CD4-positive, alpha-beta T cell (primary cell): ENCODE measurements at regions of chr17 and their contacts with region 1.

Region 1: DNA sequence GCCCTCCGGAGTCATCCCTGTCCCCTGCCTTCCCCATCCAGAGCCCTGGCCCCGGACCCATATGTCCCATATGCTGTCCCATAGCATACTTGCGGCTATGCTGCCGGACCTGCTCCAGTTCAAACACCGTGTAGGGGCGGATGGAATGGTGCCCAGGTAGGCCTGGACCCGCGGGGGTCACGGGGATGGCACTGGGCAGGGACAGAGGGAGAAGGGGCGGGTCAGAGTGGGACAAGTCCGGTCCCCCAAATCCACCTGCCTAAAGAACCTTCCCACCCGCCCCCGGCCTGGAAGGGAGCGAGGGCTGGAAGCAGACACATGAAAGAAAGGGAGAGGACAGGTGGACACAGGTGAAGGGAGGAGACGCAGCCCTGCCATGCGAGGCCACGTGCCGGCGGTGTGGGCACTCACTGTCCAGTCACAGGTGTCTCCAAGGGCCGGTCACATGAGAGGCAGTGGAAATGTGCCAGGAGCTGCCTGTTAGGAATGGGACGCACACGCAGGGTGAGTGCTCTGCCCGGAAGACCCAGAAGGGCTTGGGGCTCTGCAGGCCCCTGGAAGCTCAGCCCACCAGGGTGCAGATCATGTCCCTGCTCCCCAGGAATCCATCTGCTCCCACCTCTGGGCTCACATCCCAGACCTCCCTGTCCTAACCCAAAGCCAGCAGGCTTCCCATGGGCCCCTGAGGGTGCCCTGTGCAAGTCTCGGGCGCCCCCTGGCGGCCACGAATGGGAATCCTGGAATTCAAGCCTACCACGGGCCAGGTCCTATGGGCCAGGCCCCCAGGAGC is 14.0 kb downstream of the UBALD2 start:
- DNase-seq: peak; percentile 74 to 91 (median 84)
- ATAC-seq: peak; percentile 89
- H3K4me3 ChIP-seq: no peak overlapping the region
- H3K4me3 Mint-ChIP-seq: no peak overlapping the region
- H3K27ac ChIP-seq: no peak overlapping the region
- H3K27ac Mint-ChIP-seq: no peak overlapping the region
- H3K4me1 ChIP-seq: peaks cover 31% of the 10 kb centered on the region
- H3K4me1 Mint-ChIP-seq: peaks cover 13% of the 10 kb centered on the region
- H3K27me3 ChIP-seq: no peaks in the 10 kb centered on the region
- H3K27me3 Mint-ChIP-seq: no peaks in the 10 kb centered on the region
- CTCF ChIP-seq: peak; percentile 98

Region 2: GRCh38 chr17:76153640-76154039 is 125.5 kb before region 1 on chr17:
- CTCF ChIA-PET with region 1: interaction called, 13 read pairs
- POLR2A ChIA-PET with region 1: interaction called, 5 read pairs
- intact Hi-C with region 1: no loop called
- DNase-seq: no peak
- ATAC-seq: no peak
- H3K4me3 ChIP-seq: no peak overlapping the region
- H3K4me3 Mint-ChIP-seq: peak overlapping the region; percentile 30
- H3K27ac ChIP-seq: peak overlapping the region; percentile 24 to 72
- H3K27ac Mint-ChIP-seq: peak overlapping the region; percentile 99
- H3K4me1 ChIP-seq: peaks cover 35% of the 10 kb centered on the region
- H3K4me1 Mint-ChIP-seq: peaks cover 50% of the 10 kb centered on the region
- H3K27me3 ChIP-seq: no peaks in the 10 kb centered on the region
- H3K27me3 Mint-ChIP-seq: no peaks in the 10 kb centered on the region
- CTCF ChIP-seq: no peak

Region 3: GRCh38 chr17:76176701-76177574 is 102.2 kb before region 1 on chr17:
- CTCF ChIA-PET with region 1: interaction called, 38 read pairs
- POLR2A ChIA-PET with region 1: interaction called, 152 read pairs
- intact Hi-C with region 1: loop called in 1 of 2 experiments (anchors 1 kb)
- DNase-seq: no peak
- ATAC-seq: no peak
- H3K4me3 ChIP-seq: no peak overlapping the region
- H3K4me3 Mint-ChIP-seq: no peak overlapping the region
- H3K27ac ChIP-seq: peak overlapping the region; percentile 30 to 44
- H3K27ac Mint-ChIP-seq: peak overlapping the region; percentile 92
- H3K4me1 ChIP-seq: peaks cover 56% of the 10 kb centered on the region
- H3K4me1 Mint-ChIP-seq: peaks cover 62% of the 10 kb centered on the region
- H3K27me3 ChIP-seq: no peaks in the 10 kb centered on the region
- H3K27me3 Mint-ChIP-seq: no peaks in the 10 kb centered on the region
- CTCF ChIP-seq: no peak

Region 4: GRCh38 chr17:76370261-76370993 is 91.3 kb after region 1 on chr17:
- CTCF ChIA-PET with region 1: no interaction called
- POLR2A ChIA-PET with region 1: no interaction called
- intact Hi-C with region 1: no loop called
- DNase-seq: no peak
- ATAC-seq: no peak
- H3K4me3 ChIP-seq: no peak overlapping the region
- H3K4me3 Mint-ChIP-seq: no peak overlapping the region
- H3K27ac ChIP-seq: no peak overlapping the region
- H3K27ac Mint-ChIP-seq: no peak overlapping the region
- H3K4me1 ChIP-seq: no peaks in the 10 kb centered on the region
- H3K4me1 Mint-ChIP-seq: no peaks in the 10 kb centered on the region
- H3K27me3 ChIP-seq: no peaks in the 10 kb centered on the region
- H3K27me3 Mint-ChIP-seq: no peaks in the 10 kb centered on the region
- CTCF ChIP-seq: no peak